Activated T-helper 1 cell treated with anti-CD3 and anti-CD28 coated beads, Interleukin-12 subunit alpha, Interleukin-12 subunit beta, Interleukin-2, Interleukin-4 antibody, amounts not matched to agents 30 ng/mL and 10 ng/mL and 1 ng/mL, durations not matched to agents 14 hours and 24 hours and 36 hours (primary cell): ENCODE measurements at regions of chr13 and their contacts with region 1.

Region 1: GRCh38 chr13:21176220-21176982 is at the starts of genes MRPL57 and SKA3:
- DNase-seq: peak; percentile 95
- H3K4me3 Mint-ChIP-seq: peak within 1 kb of the TSS; percentile 98
- H3K27ac Mint-ChIP-seq: peak within 1 kb of the TSS; percentile 96
- H3K4me1 Mint-ChIP-seq: peaks cover 34% of the 10 kb centered on the region
- H3K27me3 Mint-ChIP-seq: no peaks in the 10 kb centered on the region
- total RNA-seq, gene MRPL57: 31.4 and 33.3 TPM in 2 replicates
- total RNA-seq, gene SKA3: 29.4 and 32.4 TPM in 2 replicates

Region 2: GRCh38 chr13:20525690-20526544 is 650.5 kb before region 1 on chr13 and contains the start of gene CRYL1:
- intact Hi-C with region 1: loop called (anchors 2 kb)
- DNase-seq: peak; percentile 67
- H3K4me3 Mint-ChIP-seq: peak within 1 kb of the TSS; percentile 87
- H3K27ac Mint-ChIP-seq: peak within 1 kb of the TSS; percentile 73
- H3K4me1 Mint-ChIP-seq: peaks cover 38% of the 10 kb centered on the region
- H3K27me3 Mint-ChIP-seq: peaks cover 1% of the 10 kb centered on the region
- total RNA-seq, gene CRYL1: 3.9 and 5.6 TPM in 2 replicates

Region 3: GRCh38 chr13:20902438-20903163 is 273.8 kb before region 1 on chr13 and contains the start of gene XPO4:
- intact Hi-C with region 1: loop called (anchors 2 kb)
- DNase-seq: peak; percentile 80
- H3K4me3 Mint-ChIP-seq: peak within 1 kb of the TSS; percentile 99
- H3K27ac Mint-ChIP-seq: peak within 1 kb of the TSS; percentile 94
- H3K4me1 Mint-ChIP-seq: peaks cover 32% of the 10 kb centered on the region
- H3K27me3 Mint-ChIP-seq: peaks cover 6% of the 10 kb centered on the region
- total RNA-seq, gene XPO4: 33.5 and 34.1 TPM in 2 replicates

Region 4: GRCh38 chr13:21106089-21106488 is 70.3 kb before region 1 on chr13:
- intact Hi-C with region 1: loop called (anchors 1 kb)
- DNase-seq: no peak
- H3K4me3 Mint-ChIP-seq: no peak overlapping the region
- H3K27ac Mint-ChIP-seq: no peak overlapping the region
- H3K4me1 Mint-ChIP-seq: no peaks in the 10 kb centered on the region
- H3K27me3 Mint-ChIP-seq: peaks cover 3% of the 10 kb centered on the region

Region 5: DNA sequence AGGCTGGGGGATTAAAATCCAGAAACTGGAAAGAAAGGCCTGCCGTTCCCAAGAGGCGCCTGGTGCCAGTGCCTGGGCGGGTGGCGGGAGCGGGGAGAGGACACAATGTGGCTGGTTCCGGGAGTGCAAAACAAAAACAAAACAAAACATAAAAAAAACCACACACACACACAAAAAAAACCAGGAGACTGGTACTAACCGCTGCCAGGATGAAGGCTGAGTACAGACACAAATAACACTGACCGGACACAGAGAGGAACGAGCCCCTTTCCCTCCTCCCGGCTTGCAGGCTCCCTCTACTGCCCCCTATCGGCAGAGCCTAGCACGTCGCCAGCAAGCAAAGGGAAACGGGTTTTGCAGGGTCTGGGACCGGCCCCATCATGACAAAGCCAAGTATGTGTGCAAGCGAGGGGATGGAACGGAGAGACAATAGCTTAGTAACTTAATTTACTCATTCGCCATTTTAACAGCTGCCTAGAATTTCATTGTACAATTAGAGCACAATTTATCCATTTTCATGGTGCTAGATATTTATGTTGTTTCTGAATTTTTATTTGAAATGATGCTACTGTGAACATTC is 300.6 kb after region 1 on chr13:
- intact Hi-C with region 1: loop called (anchors 1 kb)
- DNase-seq: peak; percentile 73
- H3K4me3 Mint-ChIP-seq: peak overlapping the region; percentile 67
- H3K27ac Mint-ChIP-seq: no peak overlapping the region
- H3K4me1 Mint-ChIP-seq: peaks cover 16% of the 10 kb centered on the region
- H3K27me3 Mint-ChIP-seq: peaks cover 8% of the 10 kb centered on the region